ENCODE measurements at regions of chr12 and their contacts with region 1.

Region 1: DNA sequence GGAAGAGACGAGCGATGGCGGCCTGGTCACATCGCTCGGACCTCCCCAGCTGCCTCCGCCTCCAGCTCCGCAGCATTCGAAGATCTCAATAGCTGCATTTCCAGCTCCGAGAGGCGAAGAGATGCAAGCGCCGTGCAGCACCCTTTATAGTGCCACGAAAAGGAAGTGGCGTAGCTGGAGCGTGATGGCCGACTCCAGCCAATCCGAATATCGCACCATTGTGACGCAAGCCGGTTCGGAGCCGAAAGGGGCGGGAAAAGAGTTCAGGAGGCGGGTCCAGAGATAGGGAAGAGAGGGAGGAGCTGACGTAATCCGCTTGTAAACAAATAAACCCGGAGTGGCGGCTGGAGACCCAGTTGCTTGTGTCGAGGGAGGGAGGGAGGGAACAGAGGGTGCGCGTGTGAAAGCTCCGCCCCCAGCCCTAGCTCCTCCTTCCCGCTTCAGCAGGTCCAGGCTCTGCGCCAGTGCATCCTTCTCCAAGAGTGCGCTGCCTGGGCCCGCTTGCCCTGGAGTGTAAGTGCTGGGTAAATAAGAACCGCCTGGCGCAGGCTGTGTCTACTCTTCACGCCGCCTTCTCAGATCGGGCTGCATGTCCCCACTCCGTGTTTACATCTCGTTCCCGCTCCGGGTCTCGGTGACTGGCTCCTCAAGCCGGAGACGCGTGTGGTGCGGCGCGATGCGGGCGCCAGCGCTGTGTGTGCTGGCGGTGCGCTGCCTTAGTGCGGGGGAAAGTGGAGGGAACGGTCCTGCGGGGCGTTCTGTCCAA is at the start of gene BTG1:
- DNase-seq: peak; percentile 89
- ATAC-seq: peak; percentile 75
- H3K4me3 Mint-ChIP-seq: peak within 1 kb of the TSS; percentile 98
- H3K27ac Mint-ChIP-seq: peak within 1 kb of the TSS; percentile 99
- H3K4me1 Mint-ChIP-seq: peaks cover 39% of the 10 kb centered on the region
- H3K27me3 Mint-ChIP-seq: no peaks in the 10 kb centered on the region
- CTCF ChIP-seq: no peak
- total RNA-seq, gene BTG1: 423 and 429 TPM in 2 replicates

Region 2: DNA sequence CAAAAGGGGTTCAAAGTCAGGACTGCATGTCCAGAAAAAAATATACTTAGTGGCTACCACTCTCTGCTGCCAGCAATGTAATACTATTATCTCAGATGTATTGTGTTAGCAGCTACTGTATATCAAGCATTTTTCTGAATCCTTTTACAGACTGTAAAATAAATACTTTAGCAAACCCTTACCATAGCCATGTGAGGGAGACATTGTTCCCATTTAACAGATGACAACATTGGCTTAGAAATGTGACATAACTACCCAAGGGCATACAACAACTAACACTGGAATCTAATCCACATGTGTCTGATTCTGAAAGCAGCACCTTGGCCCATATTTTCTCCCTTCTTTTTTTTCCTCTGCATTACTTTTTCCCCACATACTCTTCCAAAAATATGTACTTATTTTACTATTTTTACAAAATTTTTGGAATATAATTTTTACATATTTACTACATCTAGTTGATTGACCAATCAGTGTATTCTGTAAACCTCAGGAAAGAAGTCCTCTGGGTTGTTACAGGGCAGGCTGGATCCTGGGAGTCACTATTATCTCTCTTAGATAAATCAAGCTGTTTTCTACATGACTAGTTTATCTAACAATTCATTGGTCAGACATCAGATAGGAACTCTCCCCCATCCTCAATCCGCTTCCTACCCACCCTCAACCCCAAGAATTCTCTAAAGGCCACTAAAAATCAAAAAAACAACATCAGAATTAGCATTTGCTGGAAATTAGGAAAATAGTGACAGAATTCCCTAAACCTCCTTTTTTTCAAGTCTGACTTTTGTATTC is 154.3 kb before region 1 on chr12:
- CTCF ChIA-PET with region 1: interaction called, 15 read pairs
- POLR2A ChIA-PET with region 1: interaction called, 20 read pairs
- intact Hi-C with region 1: loop called (anchors 1 kb)
- DNase-seq: no peak
- ATAC-seq: peak; percentile 47
- H3K4me3 Mint-ChIP-seq: no peak overlapping the region
- H3K27ac Mint-ChIP-seq: no peak overlapping the region
- H3K4me1 Mint-ChIP-seq: peaks cover 2% of the 10 kb centered on the region
- H3K27me3 Mint-ChIP-seq: no peaks in the 10 kb centered on the region
- CTCF ChIP-seq: no peak

Region 3: DNA sequence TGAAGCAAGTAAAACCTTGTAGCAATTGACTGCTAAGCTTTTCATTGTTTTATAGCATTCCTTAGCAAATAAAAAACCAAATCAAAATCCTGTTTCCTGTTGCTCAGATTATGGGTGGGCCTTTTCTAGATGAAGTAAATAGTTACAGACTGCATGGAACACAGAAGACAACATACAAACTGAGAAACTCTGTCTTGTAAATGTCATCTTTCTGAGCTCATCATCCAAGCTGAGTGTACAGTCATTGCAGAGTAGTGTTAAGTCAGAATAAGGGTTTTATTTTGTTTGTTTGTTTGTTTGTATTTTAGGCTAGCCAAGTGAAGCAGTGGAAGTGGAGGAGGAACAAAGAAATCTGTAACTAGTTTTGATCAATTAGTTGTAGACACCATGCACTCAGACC is 24.1 kb after region 1 on chr12:
- CTCF ChIA-PET with region 1: interaction called, 27 read pairs
- POLR2A ChIA-PET with region 1: interaction called, 607 read pairs
- intact Hi-C with region 1: loop called (anchors 1 kb)
- DNase-seq: no peak
- ATAC-seq: no peak
- H3K4me3 Mint-ChIP-seq: peak overlapping the region; percentile 6
- H3K27ac Mint-ChIP-seq: peak overlapping the region; percentile 74
- H3K4me1 Mint-ChIP-seq: peaks cover 72% of the 10 kb centered on the region
- H3K27me3 Mint-ChIP-seq: no peaks in the 10 kb centered on the region
- CTCF ChIP-seq: no peak

Region 4: DNA sequence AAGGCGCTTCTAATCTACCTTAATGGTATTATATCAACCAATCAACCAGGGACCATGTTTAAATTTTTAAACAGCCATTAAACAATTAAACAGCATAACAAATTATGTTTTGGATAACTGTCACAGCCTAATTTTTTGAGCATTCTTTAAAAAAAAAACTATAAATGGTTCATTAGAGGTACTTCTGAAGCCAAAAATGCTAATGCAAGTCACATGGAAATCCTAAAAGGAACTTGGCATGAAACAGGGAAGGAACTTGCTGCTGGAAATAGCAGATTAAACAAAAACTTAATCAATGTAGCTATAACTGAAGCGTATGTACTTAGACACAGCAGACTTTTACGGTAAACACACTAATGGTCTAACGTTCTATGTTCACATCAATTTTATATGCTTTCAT is 189.9 kb after region 1 on chr12:
- CTCF ChIA-PET with region 1: interaction called, 4 read pairs
- POLR2A ChIA-PET with region 1: interaction called, 20 read pairs
- intact Hi-C with region 1: no loop called
- DNase-seq: no peak
- ATAC-seq: no peak
- H3K4me3 Mint-ChIP-seq: no peak overlapping the region
- H3K27ac Mint-ChIP-seq: no peak overlapping the region
- H3K4me1 Mint-ChIP-seq: peaks cover 45% of the 10 kb centered on the region
- H3K27me3 Mint-ChIP-seq: no peaks in the 10 kb centered on the region
- CTCF ChIP-seq: no peak

Region 5: GRCh38 chr12:92445253-92446082 is 299.6 kb after region 1 on chr12:
- CTCF ChIA-PET with region 1: interaction called, 11 read pairs
- POLR2A ChIA-PET with region 1: interaction called, 537 read pairs
- intact Hi-C with region 1: loop called (anchors 1 kb)
- DNase-seq: peak; percentile 55
- ATAC-seq: peak; percentile 71
- H3K4me3 Mint-ChIP-seq: peak overlapping the region; percentile 67
- H3K27ac Mint-ChIP-seq: peak overlapping the region; percentile 97
- H3K4me1 Mint-ChIP-seq: peaks cover 95% of the 10 kb centered on the region
- H3K27me3 Mint-ChIP-seq: no peaks in the 10 kb centered on the region
- CTCF ChIP-seq: no peak

Region 6: DNA sequence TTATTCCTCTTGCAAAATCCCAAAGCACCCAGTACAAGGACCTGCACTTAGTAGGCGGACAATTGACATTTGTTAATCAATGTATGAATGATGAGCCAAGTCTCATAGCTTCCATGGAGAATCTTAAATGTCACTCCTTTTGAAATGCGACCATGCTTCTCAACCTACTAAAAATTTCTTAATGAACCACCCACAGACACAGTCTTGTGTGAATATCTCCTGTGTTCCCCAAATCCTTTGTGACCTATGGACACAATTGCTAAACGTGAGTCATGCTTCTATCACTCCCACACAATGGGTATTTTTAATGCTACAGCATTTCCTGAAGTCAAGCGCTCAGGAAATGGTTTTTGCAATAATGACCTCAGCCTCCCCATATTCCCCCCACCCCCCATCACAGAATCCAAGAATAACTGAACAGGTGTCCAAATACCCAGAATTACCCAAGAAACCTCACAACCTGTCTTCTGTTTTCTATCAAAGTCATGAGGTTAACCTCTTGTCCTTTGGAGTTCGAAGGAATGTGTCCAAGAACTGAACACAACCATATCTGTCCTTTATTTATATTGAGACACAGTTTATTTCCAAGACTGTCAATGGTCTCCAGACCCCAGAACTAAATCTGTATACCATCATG is 393.3 kb after region 1 on chr12:
- CTCF ChIA-PET with region 1: no interaction called
- POLR2A ChIA-PET with region 1: interaction called, 15 read pairs
- intact Hi-C with region 1: no loop called
- DNase-seq: no peak
- ATAC-seq: peak; percentile 32
- H3K4me3 Mint-ChIP-seq: peak overlapping the region; percentile 73
- H3K27ac Mint-ChIP-seq: peak overlapping the region; percentile 97
- H3K4me1 Mint-ChIP-seq: peaks cover 79% of the 10 kb centered on the region
- H3K27me3 Mint-ChIP-seq: no peaks in the 10 kb centered on the region
- CTCF ChIP-seq: no peak

Region 7: GRCh38 chr12:92928962-92929915 is 783.3 kb after region 1 on chr12 and contains the start of gene EEA1:
- CTCF ChIA-PET with region 1: no interaction called
- POLR2A ChIA-PET with region 1: interaction called, 6 read pairs
- intact Hi-C with region 1: loop called (anchors 2 kb)
- DNase-seq: peak; percentile 91
- ATAC-seq: peak; percentile 84
- H3K4me3 Mint-ChIP-seq: peak within 1 kb of the TSS; percentile 89
- H3K27ac Mint-ChIP-seq: peak within 1 kb of the TSS; percentile 96
- H3K4me1 Mint-ChIP-seq: peaks cover 32% of the 10 kb centered on the region
- H3K27me3 Mint-ChIP-seq: no peaks in the 10 kb centered on the region
- CTCF ChIP-seq: no peak
- total RNA-seq, gene EEA1: 21.3 and 22.6 TPM in 2 replicates